CD8-positive, alpha-beta T cell (primary cell): ENCODE measurements at regions of chr1 and their contacts with region 1.

Region 1: GRCh38 chr1:40849801-40850592 is 12.2 kb downstream of the CITED4 start:
- DNase-seq: peak; percentile 57 to 88 (median 80)
- ATAC-seq: peak; percentile 91
- H3K4me3 ChIP-seq: peak overlapping the region; percentile 4 to 6
- H3K4me3 Mint-ChIP-seq: peak overlapping the region; percentile 55
- H3K27ac ChIP-seq: no peak overlapping the region
- H3K27ac Mint-ChIP-seq: no peak overlapping the region
- H3K4me1 ChIP-seq: peaks cover 5% of the 10 kb centered on the region
- H3K4me1 Mint-ChIP-seq: peaks cover 15% of the 10 kb centered on the region
- H3K27me3 ChIP-seq: no peaks in the 10 kb centered on the region
- H3K27me3 Mint-ChIP-seq: no peaks in the 10 kb centered on the region
- CTCF ChIP-seq: peak; percentile 76

Region 2: GRCh38 chr1:40143891-40144575 is 706.0 kb before region 1 on chr1:
- CTCF ChIA-PET with region 1: interaction called, 3 read pairs
- POLR2A ChIA-PET with region 1: no interaction called
- intact Hi-C with region 1: loop called (anchors 2 to 5 kb)
- DNase-seq: peak; percentile 10 to 82 (median 51)
- ATAC-seq: peak; percentile 74
- H3K4me3 ChIP-seq: no peak overlapping the region
- H3K4me3 Mint-ChIP-seq: no peak overlapping the region
- H3K27ac ChIP-seq: no peak overlapping the region
- H3K27ac Mint-ChIP-seq: no peak overlapping the region
- H3K4me1 ChIP-seq: peaks cover 3% of the 10 kb centered on the region
- H3K4me1 Mint-ChIP-seq: peaks cover 6% of the 10 kb centered on the region
- H3K27me3 ChIP-seq: no peaks in the 10 kb centered on the region
- H3K27me3 Mint-ChIP-seq: peaks cover 20% of the 10 kb centered on the region
- CTCF ChIP-seq: peak; percentile 73

Region 3: GRCh38 chr1:40153073-40153770 is 696.8 kb before region 1 on chr1:
- CTCF ChIA-PET with region 1: interaction called, 3 read pairs
- POLR2A ChIA-PET with region 1: no interaction called
- intact Hi-C with region 1: loop called in 1 of 2 experiments (anchors 5 kb)
- DNase-seq: peak in 5 of 9 experiments; percentile 5 to 84 (median 37)
- ATAC-seq: peak; percentile 88
- H3K4me3 ChIP-seq: no peak overlapping the region
- H3K4me3 Mint-ChIP-seq: peak overlapping the region; percentile 20
- H3K27ac ChIP-seq: no peak overlapping the region
- H3K27ac Mint-ChIP-seq: peak overlapping the region; percentile 65
- H3K4me1 ChIP-seq: no peaks in the 10 kb centered on the region
- H3K4me1 Mint-ChIP-seq: peaks cover 9% of the 10 kb centered on the region
- H3K27me3 ChIP-seq: no peaks in the 10 kb centered on the region
- H3K27me3 Mint-ChIP-seq: no peaks in the 10 kb centered on the region
- CTCF ChIP-seq: peak; percentile 76

Region 4: DNA sequence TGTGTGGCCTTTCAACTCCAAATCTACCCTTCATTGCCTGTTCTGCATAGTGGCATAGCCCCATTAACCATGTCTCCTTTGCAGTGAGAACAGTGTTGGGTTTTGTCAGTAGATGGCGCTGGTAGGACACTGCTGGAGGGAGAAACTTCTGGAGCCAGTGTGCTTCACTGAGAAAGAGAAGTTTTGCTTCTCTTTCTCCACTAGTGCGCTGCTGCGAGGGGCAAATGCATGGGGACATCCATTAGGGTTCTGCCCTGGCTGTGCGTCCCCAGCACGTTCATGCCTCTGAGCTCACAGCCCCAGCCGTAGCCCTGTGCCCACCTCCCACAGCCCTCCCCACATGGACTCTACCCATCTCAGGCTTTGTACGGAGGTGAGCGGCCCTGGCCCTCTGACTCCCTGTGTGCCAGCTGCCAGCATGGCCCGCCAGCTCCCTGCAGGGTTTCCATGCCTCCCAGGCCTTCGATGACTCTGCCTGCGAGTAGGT is 237.6 kb before region 1 on chr1:
- CTCF ChIA-PET with region 1: interaction called, 17 read pairs
- POLR2A ChIA-PET with region 1: no interaction called
- intact Hi-C with region 1: loop called in 1 of 2 experiments (anchors 1 kb)
- DNase-seq: peak; percentile 44 to 80 (median 68)
- ATAC-seq: peak; percentile 95
- H3K4me3 ChIP-seq: no peak overlapping the region
- H3K4me3 Mint-ChIP-seq: no peak overlapping the region
- H3K27ac ChIP-seq: no peak overlapping the region
- H3K27ac Mint-ChIP-seq: no peak overlapping the region
- H3K4me1 ChIP-seq: no peaks in the 10 kb centered on the region
- H3K4me1 Mint-ChIP-seq: no peaks in the 10 kb centered on the region
- H3K27me3 ChIP-seq: no peaks in the 10 kb centered on the region
- H3K27me3 Mint-ChIP-seq: no peaks in the 10 kb centered on the region
- CTCF ChIP-seq: peak; percentile 82

Region 5: DNA sequence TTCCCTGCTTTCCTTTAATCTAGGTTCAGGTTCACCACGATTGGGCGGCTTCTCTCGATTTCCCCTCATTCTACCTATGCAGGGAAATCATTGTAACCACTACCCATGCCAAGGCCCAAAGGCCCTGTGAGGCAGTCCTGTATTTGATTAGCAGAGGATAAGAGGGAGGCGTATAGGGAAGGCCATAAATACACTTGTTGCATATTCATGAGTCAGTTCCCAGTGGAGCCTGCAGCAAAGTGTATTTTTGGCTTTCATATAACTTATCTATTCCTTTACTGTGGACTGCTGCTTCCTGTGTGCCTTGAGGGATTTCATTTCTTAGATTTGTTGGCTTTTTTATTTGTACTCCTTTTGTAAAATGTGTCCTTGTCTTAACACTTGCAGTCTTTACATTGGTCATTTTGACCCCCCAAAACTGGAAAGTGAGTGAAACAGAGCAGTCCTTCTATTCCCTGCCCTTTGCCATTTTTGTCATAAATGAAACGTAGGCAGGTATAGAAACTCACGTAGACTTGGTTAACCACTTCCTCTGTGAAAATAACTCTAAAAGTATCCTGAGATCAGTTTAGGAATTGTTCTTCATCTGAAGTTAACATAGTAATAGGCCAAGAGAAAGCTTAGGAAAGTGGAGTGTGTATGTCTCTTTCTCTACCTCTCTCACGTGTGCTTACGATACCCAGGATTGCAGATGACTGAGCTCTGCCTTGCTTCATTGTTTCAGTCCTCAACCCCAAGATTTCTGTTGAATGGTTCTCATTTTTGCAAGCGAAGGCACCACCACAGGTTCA is 86.1 kb before region 1 on chr1:
- CTCF ChIA-PET with region 1: interaction called, 32 read pairs
- POLR2A ChIA-PET with region 1: no interaction called
- intact Hi-C with region 1: no loop called
- DNase-seq: peak in 1 of 9 experiments; percentile 34
- ATAC-seq: peak; percentile 57
- H3K4me3 ChIP-seq: no peak overlapping the region
- H3K4me3 Mint-ChIP-seq: peak overlapping the region; percentile 42
- H3K27ac ChIP-seq: peak overlapping the region in 1 of 2 experiments; percentile 9
- H3K27ac Mint-ChIP-seq: peak overlapping the region; percentile 83
- H3K4me1 ChIP-seq: peaks cover 21% of the 10 kb centered on the region
- H3K4me1 Mint-ChIP-seq: peaks cover 30% of the 10 kb centered on the region
- H3K27me3 ChIP-seq: no peaks in the 10 kb centered on the region
- H3K27me3 Mint-ChIP-seq: no peaks in the 10 kb centered on the region
- CTCF ChIP-seq: no peak

Region 6: GRCh38 chr1:40838045-40838979 is 11.7 kb before region 1 on chr1:
- CTCF ChIA-PET with region 1: interaction called, 17 read pairs
- POLR2A ChIA-PET with region 1: no interaction called
- intact Hi-C with region 1: no loop called
- DNase-seq: peak in 1 of 9 experiments; percentile 11
- ATAC-seq: no peak
- H3K4me3 ChIP-seq: no peak overlapping the region
- H3K4me3 Mint-ChIP-seq: no peak overlapping the region
- H3K27ac ChIP-seq: no peak overlapping the region
- H3K27ac Mint-ChIP-seq: no peak overlapping the region
- H3K4me1 ChIP-seq: peaks cover 28% of the 10 kb centered on the region
- H3K4me1 Mint-ChIP-seq: peaks cover 27% of the 10 kb centered on the region
- H3K27me3 ChIP-seq: no peaks in the 10 kb centered on the region
- H3K27me3 Mint-ChIP-seq: no peaks in the 10 kb centered on the region
- CTCF ChIP-seq: no peak

Region 7: DNA sequence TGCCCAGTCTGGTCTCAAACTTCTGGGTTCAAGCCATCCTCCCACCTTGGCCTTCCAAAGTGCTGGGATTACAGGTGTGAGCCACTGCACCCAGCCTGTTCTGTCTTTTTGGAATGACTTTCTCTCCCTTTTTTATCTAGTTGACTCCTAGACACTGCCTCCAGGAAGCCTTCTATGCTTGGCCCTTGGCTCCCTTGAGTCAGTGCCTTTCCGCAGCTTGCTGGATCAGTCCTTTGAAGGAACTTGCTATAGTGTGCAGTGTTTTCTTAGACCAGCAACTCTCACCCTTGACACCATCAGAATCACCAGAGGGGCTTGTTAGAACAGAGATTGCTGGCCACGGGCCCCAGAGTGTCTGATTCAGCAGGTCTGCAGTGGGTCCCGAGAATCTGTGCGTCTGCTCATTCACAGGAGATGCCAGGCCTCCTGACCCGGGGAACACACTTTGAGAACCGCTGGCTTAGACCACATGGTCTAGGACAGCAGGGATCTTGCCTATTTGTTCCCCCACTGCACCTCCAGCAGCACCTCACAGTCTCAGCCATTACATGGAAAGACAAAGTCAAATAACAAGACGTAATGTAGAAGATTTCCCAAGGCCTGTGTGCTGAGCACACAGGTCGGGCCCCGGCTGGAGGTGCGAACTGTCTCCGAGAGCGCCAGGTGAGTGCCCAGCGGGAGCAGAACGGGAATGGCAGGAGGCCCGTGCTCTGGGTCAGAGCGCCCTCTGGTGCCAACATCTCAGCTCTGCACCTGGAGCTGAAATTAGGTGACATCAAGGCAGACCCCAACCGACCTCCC is 102.1 kb after region 1 on chr1:
- CTCF ChIA-PET with region 1: interaction called, 3 read pairs
- POLR2A ChIA-PET with region 1: interaction called, 4 read pairs
- intact Hi-C with region 1: loop called in 1 of 2 experiments (anchors 2 kb)
- DNase-seq: peak; percentile 25 to 71 (median 61)
- ATAC-seq: peak; percentile 64
- H3K4me3 ChIP-seq: no peak overlapping the region
- H3K4me3 Mint-ChIP-seq: no peak overlapping the region
- H3K27ac ChIP-seq: no peak overlapping the region
- H3K27ac Mint-ChIP-seq: no peak overlapping the region
- H3K4me1 ChIP-seq: no peaks in the 10 kb centered on the region
- H3K4me1 Mint-ChIP-seq: peaks cover 5% of the 10 kb centered on the region
- H3K27me3 ChIP-seq: no peaks in the 10 kb centered on the region
- H3K27me3 Mint-ChIP-seq: peaks cover 30% of the 10 kb centered on the region
- CTCF ChIP-seq: peak; percentile 88